ENCODE measurements at regions of chr15 and their contacts with region 1.

Region 1: DNA sequence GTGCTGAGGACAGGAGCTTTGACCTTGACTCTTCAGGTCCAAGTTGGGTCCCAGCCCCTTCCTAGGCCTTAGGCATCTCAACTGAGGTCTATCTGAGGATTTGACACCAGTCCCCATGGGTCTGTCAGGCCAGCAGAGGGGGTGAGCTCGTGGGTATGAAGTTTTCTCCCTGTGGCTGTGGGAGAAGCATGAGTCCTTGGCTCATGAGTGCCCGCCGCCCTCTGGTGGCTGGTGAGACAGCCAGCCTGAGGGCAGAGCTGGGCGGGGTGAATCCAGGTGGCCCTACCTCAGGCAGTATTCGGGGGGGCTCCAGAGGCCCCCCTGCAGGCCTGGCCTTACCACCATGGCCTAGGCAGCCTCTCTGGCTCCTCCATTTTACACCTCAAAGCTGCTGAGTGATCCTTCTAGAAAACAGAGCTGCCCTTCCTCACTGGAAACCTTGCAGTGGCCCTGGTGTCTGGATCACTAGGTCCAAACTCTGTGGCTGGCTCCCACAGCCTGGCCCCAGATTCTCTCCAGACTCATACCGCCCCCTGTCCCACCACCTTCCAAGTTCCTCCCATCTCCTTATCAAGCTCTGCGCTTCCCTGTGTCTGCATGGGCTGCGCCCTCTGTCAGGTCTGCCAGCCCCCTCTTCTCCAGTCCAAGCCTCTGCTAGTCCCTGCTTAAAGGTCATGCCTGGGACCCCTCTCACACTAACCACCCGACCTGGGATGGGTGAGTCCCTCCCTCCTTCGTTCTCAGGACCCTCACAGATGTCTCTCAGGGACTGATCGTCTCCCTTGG is 16.1 kb downstream of the SH2D7 start:
- DNase-seq: peak; percentile 92
- ATAC-seq: peak; percentile 74
- H3K4me3 Mint-ChIP-seq: no peak overlapping the region
- H3K27ac Mint-ChIP-seq: no peak overlapping the region
- H3K4me1 Mint-ChIP-seq: peaks cover 32% of the 10 kb centered on the region
- H3K27me3 Mint-ChIP-seq: no peaks in the 10 kb centered on the region

Region 2: GRCh38 chr15:77650265-77650664 is 458.2 kb before region 1 on chr15:
- CTCF ChIA-PET with region 1: no interaction called
- POLR2A ChIA-PET with region 1: no interaction called
- intact Hi-C with region 1: no loop called
- DNase-seq: peak; percentile 51
- ATAC-seq: peak; percentile 58
- H3K4me3 Mint-ChIP-seq: no peak overlapping the region
- H3K27ac Mint-ChIP-seq: no peak overlapping the region
- H3K4me1 Mint-ChIP-seq: no peaks in the 10 kb centered on the region
- H3K27me3 Mint-ChIP-seq: peaks cover 4% of the 10 kb centered on the region

Region 3: GRCh38 chr15:77907824-77908751 is 200.4 kb before region 1 on chr15:
- CTCF ChIA-PET with region 1: interaction called, 9 read pairs
- POLR2A ChIA-PET with region 1: no interaction called
- intact Hi-C with region 1: loop called in 1 of 2 experiments (anchors 5 kb)
- DNase-seq: peak; percentile 86
- ATAC-seq: peak; percentile 83
- H3K4me3 Mint-ChIP-seq: no peak overlapping the region
- H3K27ac Mint-ChIP-seq: no peak overlapping the region
- H3K4me1 Mint-ChIP-seq: no peaks in the 10 kb centered on the region
- H3K27me3 Mint-ChIP-seq: peaks cover 7% of the 10 kb centered on the region

Region 4: DNA sequence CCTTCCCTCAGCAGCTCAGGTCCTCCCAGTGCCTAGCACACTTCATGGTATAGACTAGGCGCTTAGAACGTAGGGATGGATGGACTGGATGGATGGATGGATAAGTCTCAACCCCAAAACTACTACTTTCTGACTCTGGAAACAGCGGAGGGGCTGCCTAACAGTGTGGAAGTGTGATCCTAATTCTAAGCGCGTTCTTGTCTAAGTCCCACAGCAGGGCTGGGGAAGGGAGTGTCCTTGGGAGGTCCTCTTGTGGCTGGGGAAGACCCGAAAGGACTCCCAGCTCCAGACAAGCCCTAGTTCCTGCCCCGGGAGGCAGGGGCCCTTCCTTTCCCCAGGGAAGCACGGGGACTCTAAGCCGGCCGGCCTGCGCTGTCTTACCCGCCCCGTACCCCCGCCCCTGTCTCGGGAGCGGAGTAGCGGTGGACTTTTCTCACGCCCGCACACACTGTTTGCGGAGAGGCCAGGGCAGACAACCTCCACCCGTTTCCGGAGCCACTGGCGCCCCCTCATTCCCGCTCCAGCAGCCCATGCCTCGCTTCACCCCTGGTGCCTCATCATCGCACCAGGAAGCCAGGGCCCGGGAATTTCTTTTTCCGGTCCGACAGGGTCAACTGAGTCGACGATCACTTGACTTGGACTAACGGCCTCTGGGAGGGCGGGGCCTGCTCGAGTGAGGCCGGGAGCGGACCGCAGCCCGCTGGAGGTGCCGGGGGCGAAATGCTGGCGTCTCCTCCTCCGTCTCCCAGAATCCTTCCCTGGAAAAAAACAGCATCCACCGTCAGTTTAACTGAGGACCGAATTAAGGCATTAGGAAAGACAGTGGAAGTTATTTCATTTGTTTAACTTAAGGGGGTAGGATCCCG is 164.3 kb before region 1 on chr15:
- CTCF ChIA-PET with region 1: no interaction called
- POLR2A ChIA-PET with region 1: no interaction called
- intact Hi-C with region 1: no loop called
- DNase-seq: peak; percentile 58
- ATAC-seq: peak; percentile 79
- H3K4me3 Mint-ChIP-seq: peak overlapping the region; percentile 38
- H3K27ac Mint-ChIP-seq: no peak overlapping the region
- H3K4me1 Mint-ChIP-seq: peaks cover 3% of the 10 kb centered on the region
- H3K27me3 Mint-ChIP-seq: peaks cover 6% of the 10 kb centered on the region

Region 5: GRCh38 chr15:78000091-78000926 is 108.2 kb before region 1 on chr15:
- CTCF ChIA-PET with region 1: interaction called, 64 read pairs
- POLR2A ChIA-PET with region 1: no interaction called
- intact Hi-C with region 1: loop called (anchors 1 kb)
- DNase-seq: peak; percentile 92
- ATAC-seq: peak; percentile 98
- H3K4me3 Mint-ChIP-seq: no peak overlapping the region
- H3K27ac Mint-ChIP-seq: peak overlapping the region; percentile 1
- H3K4me1 Mint-ChIP-seq: peaks cover 8% of the 10 kb centered on the region
- H3K27me3 Mint-ChIP-seq: no peaks in the 10 kb centered on the region

Region 6: DNA sequence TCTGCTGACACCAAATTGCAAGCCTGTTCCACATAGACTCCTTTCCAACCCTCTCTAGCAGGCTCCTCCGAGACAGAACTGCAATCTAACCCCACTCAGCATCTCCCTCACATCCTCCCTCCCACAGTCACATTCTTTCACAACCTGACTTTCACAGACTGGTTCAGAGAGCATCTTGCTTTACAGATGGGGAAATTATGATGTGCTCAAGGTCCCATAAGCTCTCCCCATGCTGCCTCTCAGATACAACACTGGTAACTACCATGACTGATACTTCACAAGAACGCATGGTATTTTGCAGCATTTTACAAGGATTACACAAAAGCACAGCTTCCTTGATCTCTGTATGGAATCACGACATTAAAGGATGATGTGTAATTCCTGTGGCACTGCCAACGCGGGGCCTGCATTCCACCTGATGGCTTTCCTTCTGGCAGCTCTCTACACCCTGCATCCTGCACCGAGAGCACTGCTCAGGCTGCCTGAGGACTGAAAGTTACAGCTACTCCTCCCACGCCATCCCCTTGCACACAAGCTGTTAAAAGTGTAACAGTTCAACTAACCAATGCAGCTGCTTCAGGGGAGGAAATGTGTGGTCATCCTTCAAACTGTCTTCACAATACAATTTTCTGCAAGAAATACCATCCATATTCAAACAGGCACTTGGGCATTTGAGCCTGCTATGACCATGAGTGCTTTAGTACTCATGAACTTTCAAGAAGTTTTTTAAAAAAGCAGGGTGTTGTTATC is 58.6 kb before region 1 on chr15:
- CTCF ChIA-PET with region 1: interaction called, 10 read pairs
- POLR2A ChIA-PET with region 1: no interaction called
- intact Hi-C with region 1: no loop called
- DNase-seq: peak; percentile 86
- ATAC-seq: peak; percentile 63
- H3K4me3 Mint-ChIP-seq: peak overlapping the region; percentile 54
- H3K27ac Mint-ChIP-seq: peak overlapping the region; percentile 90
- H3K4me1 Mint-ChIP-seq: peaks cover 97% of the 10 kb centered on the region
- H3K27me3 Mint-ChIP-seq: no peaks in the 10 kb centered on the region

Region 7: GRCh38 chr15:78120523-78120922 is 12.0 kb after region 1 on chr15:
- CTCF ChIA-PET with region 1: interaction called, 17 read pairs
- POLR2A ChIA-PET with region 1: no interaction called
- intact Hi-C with region 1: no loop called
- DNase-seq: no peak
- ATAC-seq: no peak
- H3K4me3 Mint-ChIP-seq: no peak overlapping the region
- H3K27ac Mint-ChIP-seq: no peak overlapping the region
- H3K4me1 Mint-ChIP-seq: no peaks in the 10 kb centered on the region
- H3K27me3 Mint-ChIP-seq: no peaks in the 10 kb centered on the region

Region 8: DNA sequence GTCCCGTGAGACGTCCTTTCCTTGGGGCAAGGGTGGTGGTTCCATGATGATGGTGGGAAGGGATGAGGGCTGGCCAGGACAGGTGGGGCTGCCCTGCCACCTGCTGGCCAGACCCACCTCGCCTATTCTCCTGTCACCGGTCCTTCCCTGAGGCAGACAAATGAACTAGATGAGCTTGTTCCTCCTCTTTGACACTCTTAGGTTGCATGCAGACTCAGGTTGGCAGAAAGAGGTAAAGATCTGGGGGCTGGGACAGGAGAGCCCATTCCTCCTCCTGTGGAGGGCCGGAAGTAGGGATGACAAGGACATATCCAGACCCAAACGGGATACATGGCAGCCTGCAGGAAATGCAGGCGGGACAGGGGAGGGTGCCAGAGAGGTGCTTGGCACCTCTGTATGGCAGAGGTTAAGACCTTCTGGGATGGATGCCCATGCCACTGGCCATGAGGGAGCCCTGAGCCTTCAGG is 87.3 kb after region 1 on chr15:
- CTCF ChIA-PET with region 1: interaction called, 30 read pairs
- POLR2A ChIA-PET with region 1: no interaction called
- intact Hi-C with region 1: loop called (anchors 1 kb)
- DNase-seq: peak; percentile 66
- ATAC-seq: peak; percentile 87
- H3K4me3 Mint-ChIP-seq: no peak overlapping the region
- H3K27ac Mint-ChIP-seq: no peak overlapping the region
- H3K4me1 Mint-ChIP-seq: no peaks in the 10 kb centered on the region
- H3K27me3 Mint-ChIP-seq: no peaks in the 10 kb centered on the region

Region 9: DNA sequence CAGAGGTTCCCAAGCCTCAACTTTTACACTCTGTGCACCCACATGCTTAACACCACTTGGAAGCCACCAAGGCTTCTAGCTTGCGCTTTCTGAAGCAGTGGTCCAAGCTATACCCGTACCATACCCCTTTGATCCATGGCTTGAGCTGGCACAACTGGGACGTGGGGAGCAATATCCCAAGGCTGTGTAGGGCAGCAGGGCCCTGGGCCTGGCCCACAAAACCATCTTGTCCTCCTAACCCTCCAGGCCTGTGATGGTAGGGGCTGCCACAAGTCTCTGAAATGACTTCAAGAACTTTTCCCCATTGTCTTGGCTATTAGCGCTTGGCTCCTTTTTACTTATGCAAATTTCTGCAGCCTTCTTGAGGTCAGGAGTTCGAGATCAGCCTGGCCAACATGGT is 415.7 kb after region 1 on chr15:
- CTCF ChIA-PET with region 1: no interaction called
- POLR2A ChIA-PET with region 1: no interaction called
- intact Hi-C with region 1: no loop called
- DNase-seq: no peak
- ATAC-seq: no peak
- H3K4me3 Mint-ChIP-seq: no peak overlapping the region
- H3K27ac Mint-ChIP-seq: no peak overlapping the region
- H3K4me1 Mint-ChIP-seq: no peaks in the 10 kb centered on the region
- H3K27me3 Mint-ChIP-seq: no peaks in the 10 kb centered on the region

Region 10: DNA sequence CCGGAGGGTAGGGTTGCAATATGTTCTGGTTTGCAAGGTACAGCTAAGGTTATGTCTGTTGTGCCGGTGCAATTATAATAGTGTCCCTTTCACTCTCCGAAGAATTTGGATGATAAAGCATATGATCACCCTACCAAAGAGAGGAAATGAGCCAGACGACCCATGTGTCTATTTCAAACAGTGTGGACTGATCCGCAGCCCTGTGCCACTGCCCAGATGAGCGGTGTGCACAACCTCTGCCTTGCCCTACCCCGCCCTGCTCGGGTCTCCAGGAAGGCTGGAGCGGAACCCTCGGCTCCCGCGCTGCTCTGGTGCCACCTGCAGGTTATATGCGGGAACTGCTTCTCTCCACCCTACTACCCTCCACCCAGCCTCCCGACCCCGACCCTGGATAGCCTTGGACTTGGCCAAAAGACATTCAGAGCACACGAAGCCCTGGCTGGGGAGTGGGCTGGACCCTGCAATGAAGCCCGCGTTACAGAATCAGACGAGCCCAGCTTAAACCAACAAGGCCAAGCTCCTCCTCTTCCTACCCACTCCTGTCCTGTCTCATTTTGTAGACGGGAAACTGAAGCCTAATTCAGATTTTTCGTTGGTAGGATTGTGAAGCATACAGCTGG is 600.9 kb after region 1 on chr15:
- CTCF ChIA-PET with region 1: interaction called, 4 read pairs
- POLR2A ChIA-PET with region 1: no interaction called
- intact Hi-C with region 1: loop called in 1 of 2 experiments (anchors 5 kb)
- DNase-seq: peak; percentile 84
- ATAC-seq: peak; percentile 98
- H3K4me3 Mint-ChIP-seq: no peak overlapping the region
- H3K27ac Mint-ChIP-seq: no peak overlapping the region
- H3K4me1 Mint-ChIP-seq: no peaks in the 10 kb centered on the region
- H3K27me3 Mint-ChIP-seq: peaks cover 27% of the 10 kb centered on the region

Measured in activated CD4-positive, alpha-beta T cell treated with anti-CD3 and anti-CD28 coated beads for 36 hours (primary cell).